H1 (cell line): ENCODE measurements at regions of chr11 and their contacts with region 1.

Region 1: GRCh38 chr11:133947321-133947756 is 9.4 kb downstream of the IGSF9B start:
- DNase-seq: peak in 1 of 2 experiments; percentile 87
- H3K4me3 ChIP-seq: no peak overlapping the region; a peak in 2 of 8 replicates
- H3K27ac ChIP-seq: no peak overlapping the region
- H3K4me1 ChIP-seq: peaks cover 16 to 63% (median 54%) of the 10 kb centered on the region in 4 experiments
- H3K27me3 ChIP-seq: no peaks in the 10 kb centered on the region
- CTCF ChIP-seq: peak in 2 of 3 experiments; percentile 45 to 54; a peak in 3 of 4 replicates
- EP300 ChIP-seq: no peak
- POLR2A ChIP-seq: no peak
- RAD21 ChIP-seq: peak; percentile 55 to 60; a peak in 3 of 4 replicates

Region 2: DNA sequence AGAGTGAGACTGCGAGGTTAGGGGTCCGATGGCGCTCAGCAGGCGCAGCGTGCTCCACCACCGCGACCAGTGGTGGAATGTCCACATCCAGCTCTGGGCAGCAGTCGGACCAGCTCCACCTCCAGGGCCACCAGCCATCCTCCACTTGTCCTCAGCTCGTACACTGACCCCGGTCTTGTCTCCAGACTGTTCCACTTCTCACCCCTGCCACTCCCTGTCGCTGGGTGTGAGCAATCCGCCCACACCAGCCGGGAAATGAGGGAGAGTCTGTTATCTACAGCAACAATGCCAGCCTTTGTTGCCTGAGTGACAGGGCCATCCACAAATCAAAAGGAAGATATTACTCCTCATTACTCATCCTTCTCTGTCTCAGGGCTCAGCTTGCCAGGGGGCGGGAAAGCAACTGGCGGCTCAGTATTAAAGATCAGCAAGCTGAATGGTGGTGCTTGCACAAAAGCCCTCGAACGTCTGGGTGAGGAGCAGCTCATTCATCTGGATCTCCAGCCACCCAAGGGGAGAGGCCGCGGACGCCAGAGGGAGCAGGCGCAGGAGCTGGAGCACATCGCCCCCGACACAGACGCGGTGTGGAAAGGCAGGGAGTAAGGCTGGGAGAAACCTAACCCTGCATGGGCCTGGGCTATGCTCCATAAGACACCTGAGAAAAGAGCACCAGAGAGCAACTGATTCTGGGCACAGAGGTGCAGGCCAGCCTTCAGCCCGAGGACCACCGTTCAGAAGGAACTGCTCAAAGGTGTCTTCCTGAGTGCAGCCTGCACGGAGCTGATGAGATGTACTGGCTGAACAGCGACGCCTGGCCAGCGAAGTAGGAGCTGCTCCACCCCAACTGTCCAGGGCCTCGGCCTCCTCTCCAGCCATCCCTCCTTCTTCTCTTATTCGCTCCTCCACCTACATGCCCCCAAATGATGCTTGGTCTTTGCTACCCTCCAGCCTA is 12.5 kb before region 1 on chr11:
- CTCF ChIA-PET with region 1: interaction called, 27 read pairs
- POLR2A ChIA-PET with region 1: interaction called, 8 read pairs
- DNase-seq: no peak
- H3K4me3 ChIP-seq: no peak overlapping the region
- H3K27ac ChIP-seq: no peak overlapping the region
- H3K4me1 ChIP-seq: no peaks in the 10 kb centered on the region
- H3K27me3 ChIP-seq: no peaks in the 10 kb centered on the region
- CTCF ChIP-seq: no peak
- EP300 ChIP-seq: no peak
- POLR2A ChIP-seq: no peak
- RAD21 ChIP-seq: no peak

Region 3: DNA sequence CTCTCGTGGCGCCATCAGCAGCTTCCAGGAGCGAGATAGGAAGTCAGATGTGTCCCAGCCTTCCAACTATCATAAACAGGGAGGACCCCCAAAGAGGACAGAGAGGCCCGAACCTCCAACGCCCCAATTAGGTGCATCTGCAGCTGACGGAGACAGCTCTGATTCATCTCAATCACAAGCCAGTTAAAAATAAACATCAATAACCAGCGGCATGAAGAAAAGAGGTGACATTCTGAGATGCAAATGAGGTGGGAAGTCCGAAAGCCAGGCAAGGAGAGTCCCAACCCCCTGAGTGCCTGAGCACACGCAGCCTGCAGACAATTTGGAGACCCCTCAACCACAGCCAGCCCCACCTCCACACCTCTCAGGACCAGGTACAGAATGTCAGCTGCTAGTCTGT is 37.5 kb after region 1 on chr11:
- CTCF ChIA-PET with region 1: interaction called, 10 read pairs
- POLR2A ChIA-PET with region 1: interaction called, 3 read pairs
- DNase-seq: no peak
- H3K4me3 ChIP-seq: no peak overlapping the region
- H3K27ac ChIP-seq: no peak overlapping the region
- H3K4me1 ChIP-seq: no peaks in the 10 kb centered on the region; a peak in 1 of 7 replicates
- H3K27me3 ChIP-seq: 0 out of 7 replicates have a peak, but pooled peaks cover 0 to 2% (median 0%) of the 10 kb centered on the region in 4 experiments
- CTCF ChIP-seq: no peak
- EP300 ChIP-seq: no peak
- POLR2A ChIP-seq: no peak
- RAD21 ChIP-seq: no peak

Region 4: GRCh38 chr11:134033696-134034491 is 86.6 kb after region 1 on chr11:
- CTCF ChIA-PET with region 1: interaction called, 32 read pairs
- POLR2A ChIA-PET with region 1: no interaction called
- DNase-seq: peak; percentile 77 to 78
- H3K4me3 ChIP-seq: peak overlapping the region in 1 of 4 experiments; percentile 23; a peak in 1 of 8 replicates
- H3K27ac ChIP-seq: no peak overlapping the region
- H3K4me1 ChIP-seq: peaks cover 3 to 27% (median 23%) of the 10 kb centered on the region in 4 experiments
- H3K27me3 ChIP-seq: peaks cover 0 to 5% (median 3%) of the 10 kb centered on the region in 4 experiments; a peak in 3 of 7 replicates
- CTCF ChIP-seq: no peak
- EP300 ChIP-seq: no peak
- POLR2A ChIP-seq: peak in 1 of 2 experiments; percentile 64; a peak in 2 of 3 replicates
- RAD21 ChIP-seq: no peak

Region 5: DNA sequence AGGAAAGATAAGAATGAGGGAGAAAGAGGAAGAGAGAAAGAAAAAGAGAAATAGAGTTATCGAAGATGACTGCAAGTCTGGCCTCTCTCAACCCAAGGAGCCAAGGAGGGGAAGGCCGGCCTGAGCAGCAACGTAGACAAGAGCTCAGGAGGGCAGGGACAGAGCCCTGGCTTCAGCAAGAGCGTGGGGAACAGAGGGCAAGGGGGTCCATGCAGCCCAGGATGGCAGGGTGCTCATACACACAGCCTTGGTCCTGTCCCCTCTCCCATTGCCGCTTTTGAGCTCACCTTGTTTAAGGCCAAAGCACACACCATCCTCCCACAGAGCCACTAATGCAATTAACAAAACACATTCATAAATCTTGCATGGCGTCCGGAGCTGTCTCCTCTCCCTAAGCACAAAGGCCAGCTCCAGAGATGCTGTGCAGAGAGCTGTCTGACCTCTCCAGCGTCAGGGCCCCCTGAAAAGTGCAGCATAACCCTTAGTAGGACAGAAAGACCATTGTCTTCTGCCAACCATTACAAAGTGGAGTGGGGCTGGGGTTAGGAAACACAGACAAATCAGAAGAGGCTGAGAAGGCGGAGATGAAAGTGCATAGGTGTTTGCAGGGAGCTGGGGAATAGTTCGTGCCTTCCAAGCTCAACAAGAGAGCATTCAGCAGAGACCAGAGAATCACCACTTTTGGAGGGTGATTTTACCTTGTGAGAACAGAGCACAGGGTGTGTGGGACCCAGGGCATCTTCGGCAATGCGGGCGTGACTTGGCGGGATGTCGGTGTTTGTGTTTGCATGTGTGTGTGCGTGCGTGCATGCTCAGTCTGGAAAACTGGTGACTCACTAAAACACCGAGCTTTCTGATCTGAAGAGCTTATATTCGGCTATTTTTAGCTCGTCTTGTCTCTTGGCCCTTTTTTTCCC is 93.3 kb after region 1 on chr11:
- CTCF ChIA-PET with region 1: interaction called, 15 read pairs
- POLR2A ChIA-PET with region 1: no interaction called
- DNase-seq: no peak
- H3K4me3 ChIP-seq: no peak overlapping the region
- H3K27ac ChIP-seq: no peak overlapping the region; the same call in 1 of the 2 replicates
- H3K4me1 ChIP-seq: peaks cover 3 to 13% (median 7%) of the 10 kb centered on the region in 4 experiments
- H3K27me3 ChIP-seq: no peaks in the 10 kb centered on the region; a peak in 2 of 7 replicates
- CTCF ChIP-seq: no peak
- EP300 ChIP-seq: no peak
- POLR2A ChIP-seq: no peak
- RAD21 ChIP-seq: no peak

Region 6: DNA sequence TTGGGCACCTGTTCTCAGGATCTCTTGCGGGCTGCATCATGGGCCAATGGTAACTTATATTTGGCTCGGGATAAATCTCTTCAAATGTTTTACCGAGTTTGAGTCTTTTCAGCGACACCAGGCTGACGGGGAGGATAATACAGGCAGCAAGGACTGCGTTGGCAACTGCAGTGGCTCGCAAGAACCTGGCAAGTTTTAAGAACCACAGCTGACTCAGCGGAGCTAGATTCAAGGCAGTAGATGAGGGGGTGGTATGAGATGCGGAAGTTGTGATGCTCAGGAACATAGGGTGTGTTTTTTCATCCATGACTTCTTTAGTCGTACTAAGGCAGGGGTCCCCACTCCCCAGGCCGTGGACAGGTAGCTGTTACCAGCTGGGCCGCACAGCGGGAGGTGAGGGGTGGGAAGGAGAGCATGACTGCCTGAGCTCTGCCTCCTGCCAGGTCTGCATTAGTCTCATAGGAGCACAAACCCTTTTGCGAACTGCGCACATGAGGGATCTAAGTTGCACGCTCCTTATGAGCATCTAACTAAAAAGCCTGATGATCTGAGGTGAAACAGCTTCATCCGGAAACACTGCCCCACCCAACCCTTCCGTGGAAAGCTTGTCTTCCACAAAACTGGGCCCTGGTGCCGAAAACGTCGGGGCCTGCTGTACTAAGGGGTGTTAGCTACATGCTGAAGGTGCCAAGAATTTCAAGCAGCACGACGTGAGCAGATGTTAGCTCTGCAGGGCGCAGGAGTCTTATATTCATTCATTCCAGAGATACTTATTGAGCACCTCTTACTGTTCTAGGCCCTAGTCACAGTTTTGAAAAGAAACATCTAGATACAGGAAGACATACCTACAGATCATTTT is 115.2 kb after region 1 on chr11:
- CTCF ChIA-PET with region 1: no interaction called
- POLR2A ChIA-PET with region 1: no interaction called
- DNase-seq: peak in 1 of 2 experiments; percentile 40
- H3K4me3 ChIP-seq: no peak overlapping the region
- H3K27ac ChIP-seq: no peak overlapping the region
- H3K4me1 ChIP-seq: peaks cover 0 to 2% (median 0%) of the 10 kb centered on the region in 4 experiments; a peak in 2 of 7 replicates
- H3K27me3 ChIP-seq: no peaks in the 10 kb centered on the region
- CTCF ChIP-seq: no peak
- EP300 ChIP-seq: no peak
- POLR2A ChIP-seq: no peak
- RAD21 ChIP-seq: no peak